ENCODE measurements at regions of chr1 and their contacts with region 1.

Region 1: DNA sequence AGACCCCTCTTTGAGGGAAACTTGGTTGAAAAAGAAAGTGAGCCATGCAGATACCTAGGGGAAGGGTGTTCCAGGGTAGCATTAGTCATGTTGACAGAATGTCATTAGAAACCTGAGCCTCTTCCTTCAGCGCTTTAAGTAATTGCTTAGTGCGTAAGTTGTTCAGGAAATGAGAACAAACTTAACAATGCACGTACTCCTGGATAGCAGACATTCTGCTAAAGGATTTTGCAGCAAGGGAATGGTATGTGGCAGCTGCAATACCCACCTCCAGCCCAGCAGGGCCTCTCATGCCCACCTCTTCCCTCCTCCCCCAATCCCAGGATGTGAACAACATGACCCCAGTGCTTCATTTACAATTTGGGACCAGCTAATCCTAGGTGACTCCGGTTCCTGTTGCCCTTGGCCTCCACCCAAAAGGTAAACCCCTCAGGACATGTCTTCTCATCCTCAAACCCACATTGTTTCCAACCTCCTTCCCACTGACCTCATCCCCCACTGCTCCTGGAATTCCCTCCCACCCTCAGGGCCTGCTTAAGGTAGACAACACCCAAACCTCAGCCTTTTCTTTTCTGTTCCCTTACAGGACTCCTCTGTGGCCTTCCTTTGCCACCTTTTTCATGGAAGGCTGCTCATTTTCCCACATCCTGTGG is 98.0 kb upstream of the BCAR3 start:
- DNase-seq: no peak

Region 2: GRCh38 chr1:93672069-93672468 is 107.6 kb before region 1 on chr1:
- in situ Hi-C with region 1: loop called (anchors 10 kb)
- DNase-seq: no peak

Region 3: GRCh38 chr1:93904228-93904627 is 124.6 kb after region 1 on chr1:
- in situ Hi-C with region 1: no loop called
- DNase-seq: no peak

Measured in SK-MEL-5 (cell line).